SK-N-SH (cell line): ENCODE measurements at regions of chr21 and their contacts with region 1.

Region 1: DNA sequence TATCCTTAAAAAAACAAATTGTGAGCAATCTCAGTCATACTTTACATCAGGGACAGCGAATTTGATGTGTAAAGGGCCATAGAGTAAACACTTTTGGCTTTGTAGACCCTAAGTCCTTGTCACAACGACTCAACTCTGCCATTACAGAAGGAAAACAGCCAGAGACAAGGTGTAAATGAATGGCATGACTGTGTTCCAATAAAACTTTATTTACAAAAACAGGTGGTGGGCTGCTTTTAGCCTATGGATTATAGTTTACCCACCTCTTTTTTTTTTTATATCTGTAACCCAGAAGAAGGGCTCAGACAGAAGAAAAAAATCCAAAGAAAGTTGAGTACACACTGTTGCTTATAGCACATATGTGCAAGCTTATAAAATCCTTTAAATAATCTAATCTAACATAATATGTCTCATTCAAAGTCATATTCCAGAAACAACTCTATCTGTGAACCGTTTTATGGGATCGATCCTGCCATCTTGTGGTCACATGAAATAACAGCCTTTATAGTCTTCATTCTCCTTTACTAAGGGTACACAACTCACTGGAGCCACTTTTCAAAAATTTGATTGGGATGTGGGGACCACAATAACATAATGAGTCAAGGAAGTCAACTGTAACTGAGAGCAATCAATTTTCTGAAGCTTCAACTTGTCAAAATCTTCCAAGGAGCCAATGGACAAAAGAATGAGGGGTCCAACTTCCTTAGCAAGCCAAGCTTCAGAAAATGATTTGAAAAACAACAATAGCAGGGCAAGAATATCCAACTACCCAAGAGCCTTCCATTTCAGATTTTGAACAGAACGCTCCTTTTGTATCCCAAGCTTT is 142.2 kb upstream of the KRTAP19-8 start:
- DNase-seq: peak; percentile 68
- H3K4me3 ChIP-seq: no peak overlapping the region
- H3K27ac ChIP-seq: peak overlapping the region in 1 of 2 experiments; percentile 36; a peak in 2 of 4 replicates
- H3K4me1 ChIP-seq: peaks cover 0 to 30% of the 10 kb centered on the region in 2 experiments; a peak in 2 of 4 replicates
- H3K27me3 ChIP-seq: no peaks in the 10 kb centered on the region
- CTCF ChIP-seq: peak; percentile 78
- EP300 ChIP-seq: no peak
- RAD21 ChIP-seq: peak; percentile 87

Region 2: GRCh38 chr21:30962013-30962412 is 218.5 kb before region 1 on chr21:
- CTCF ChIA-PET with region 1: no interaction called
- POLR2A ChIA-PET with region 1: no interaction called
- DNase-seq: no peak
- H3K4me3 ChIP-seq: no peak overlapping the region
- H3K27ac ChIP-seq: no peak overlapping the region
- H3K4me1 ChIP-seq: no peaks in the 10 kb centered on the region
- H3K27me3 ChIP-seq: no peaks in the 10 kb centered on the region; the same call in 1 of the 2 replicates
- CTCF ChIP-seq: peak; percentile 40
- EP300 ChIP-seq: no peak
- RAD21 ChIP-seq: no peak

Region 3: DNA sequence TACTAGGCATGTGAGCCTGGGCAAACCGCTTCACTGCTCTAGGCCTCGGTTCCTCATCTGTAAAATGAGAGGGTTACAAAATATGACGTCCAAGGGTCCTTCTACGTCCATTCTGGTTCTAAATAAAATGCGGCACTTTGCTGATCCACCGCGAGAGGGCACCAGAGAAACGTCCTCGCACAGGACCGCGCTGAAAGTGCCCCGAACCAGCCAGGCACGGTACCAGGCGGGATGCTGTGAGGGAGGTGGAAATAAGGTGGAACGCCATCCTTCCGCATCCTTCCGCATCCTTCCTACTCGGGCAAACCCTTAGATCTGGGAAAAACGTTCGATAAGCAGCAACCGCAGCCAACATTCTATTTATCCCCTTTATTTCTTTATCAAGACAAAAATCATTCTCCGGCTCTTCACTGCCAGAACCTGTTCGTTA is 81.9 kb before region 1 on chr21:
- CTCF ChIA-PET with region 1: interaction called, 139 read pairs
- POLR2A ChIA-PET with region 1: interaction called, 3 read pairs
- DNase-seq: peak; percentile 75
- H3K4me3 ChIP-seq: no peak overlapping the region; a peak in 1 of 4 replicates
- H3K27ac ChIP-seq: no peak overlapping the region
- H3K4me1 ChIP-seq: peaks cover 0 to 2% of the 10 kb centered on the region in 2 experiments; a peak in 1 of 4 replicates
- H3K27me3 ChIP-seq: no peaks in the 10 kb centered on the region; the same call in 1 of the 2 replicates
- CTCF ChIP-seq: peak; percentile 92
- EP300 ChIP-seq: no peak
- RAD21 ChIP-seq: peak; percentile 90

Region 4: GRCh38 chr21:31107871-31108270 is 72.6 kb before region 1 on chr21:
- CTCF ChIA-PET with region 1: interaction called, 139 read pairs
- POLR2A ChIA-PET with region 1: no interaction called
- DNase-seq: no peak
- H3K4me3 ChIP-seq: no peak overlapping the region
- H3K27ac ChIP-seq: no peak overlapping the region
- H3K4me1 ChIP-seq: peaks cover 0 to 2% of the 10 kb centered on the region in 2 experiments; a peak in 1 of 4 replicates
- H3K27me3 ChIP-seq: no peaks in the 10 kb centered on the region
- CTCF ChIP-seq: no peak
- EP300 ChIP-seq: no peak
- RAD21 ChIP-seq: no peak

Region 5: GRCh38 chr21:31117128-31117916 is 63.1 kb before region 1 on chr21:
- CTCF ChIA-PET with region 1: interaction called, 114 read pairs
- POLR2A ChIA-PET with region 1: no interaction called
- DNase-seq: no peak
- H3K4me3 ChIP-seq: no peak overlapping the region
- H3K27ac ChIP-seq: peak overlapping the region in 1 of 2 experiments; percentile 53; a peak in 3 of 4 replicates
- H3K4me1 ChIP-seq: peaks cover 2 to 7% of the 10 kb centered on the region in 2 experiments; a peak in 3 of 4 replicates
- H3K27me3 ChIP-seq: no peaks in the 10 kb centered on the region
- CTCF ChIP-seq: peak; percentile 28; the same call in 1 of the 2 replicates
- EP300 ChIP-seq: no peak
- RAD21 ChIP-seq: 0 out of 2 replicates have a peak, but pooled peaks have one; percentile 20

Region 6: GRCh38 chr21:31128234-31128633 is 52.2 kb before region 1 on chr21:
- CTCF ChIA-PET with region 1: interaction called, 19 read pairs
- POLR2A ChIA-PET with region 1: no interaction called
- DNase-seq: no peak
- H3K4me3 ChIP-seq: no peak overlapping the region
- H3K27ac ChIP-seq: no peak overlapping the region
- H3K4me1 ChIP-seq: peaks cover 0 to 6% of the 10 kb centered on the region in 2 experiments; a peak in 1 of 4 replicates
- H3K27me3 ChIP-seq: no peaks in the 10 kb centered on the region
- CTCF ChIP-seq: no peak
- EP300 ChIP-seq: no peak
- RAD21 ChIP-seq: no peak

Region 7: DNA sequence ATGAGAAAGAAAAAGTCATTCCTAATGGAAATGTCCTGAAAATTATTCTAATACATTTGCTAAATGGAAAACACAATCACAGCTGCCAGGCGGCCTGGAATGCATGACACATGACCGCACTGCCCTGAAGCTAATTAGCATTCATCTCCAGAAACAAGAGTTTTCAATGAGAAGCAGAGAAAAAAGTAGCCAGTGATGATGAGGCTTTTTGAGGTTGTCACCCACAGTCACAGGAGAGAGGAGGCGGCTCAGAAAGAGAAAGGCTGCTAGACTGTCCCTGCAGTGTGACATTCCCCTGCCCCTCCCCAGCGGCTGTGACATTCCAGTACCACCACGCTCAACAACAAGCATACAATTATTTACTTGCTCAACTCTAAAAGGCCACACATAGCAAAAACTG is 19.3 kb before region 1 on chr21:
- CTCF ChIA-PET with region 1: interaction called, 24 read pairs
- POLR2A ChIA-PET with region 1: interaction called, 3 read pairs
- DNase-seq: peak; percentile 44
- H3K4me3 ChIP-seq: peak overlapping the region; percentile 52 to 61
- H3K27ac ChIP-seq: peak overlapping the region in 1 of 2 experiments; percentile 95; a peak in 2 of 4 replicates
- H3K4me1 ChIP-seq: peaks cover 0 to 27% of the 10 kb centered on the region in 2 experiments; a peak in 2 of 4 replicates
- H3K27me3 ChIP-seq: no peaks in the 10 kb centered on the region
- CTCF ChIP-seq: no peak
- EP300 ChIP-seq: 0 out of 4 replicates have a peak, but pooled peaks of 1 of the 2 experiments have one; percentile 22
- RAD21 ChIP-seq: no peak